ENCODE measurements at regions of chr14 and their contacts with region 1.

Region 1: GRCh38 chr14:23953464-23954278 is at the start of gene DHRS4:
- DNase-seq: peak; percentile 87
- H3K4me3 Mint-ChIP-seq: peak within 1 kb of the TSS; percentile 99
- H3K27ac Mint-ChIP-seq: peak within 1 kb of the TSS; percentile 94
- H3K4me1 Mint-ChIP-seq: peaks cover 22% of the 10 kb centered on the region
- H3K27me3 Mint-ChIP-seq: no peaks in the 10 kb centered on the region
- total RNA-seq, gene DHRS4: 22.8 to 24.0 TPM

Region 2: DNA sequence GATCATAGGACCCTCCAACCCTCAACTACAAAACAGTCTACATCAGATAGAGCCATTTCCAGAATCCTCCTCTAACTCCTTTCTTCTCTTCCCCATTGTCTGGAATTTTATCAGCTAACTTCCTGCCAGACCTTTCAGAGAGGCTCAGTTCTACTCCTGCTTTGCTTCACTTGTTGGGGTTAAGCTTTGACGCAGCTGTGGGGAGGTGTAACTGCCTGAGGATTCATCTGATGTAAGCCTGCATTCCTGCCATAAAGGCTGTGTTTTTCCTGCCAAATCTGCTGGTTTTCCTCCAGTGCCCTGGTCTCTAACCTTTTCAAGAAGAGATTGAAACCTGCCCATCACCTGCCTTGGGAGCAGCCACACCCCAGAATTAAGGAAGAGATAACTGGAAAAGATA is 300.6 kb before region 1 on chr14:
- CTCF ChIA-PET with region 1: no interaction called
- intact Hi-C with region 1: no loop called
- DNase-seq: no peak
- H3K4me3 Mint-ChIP-seq: no peak overlapping the region
- H3K27ac Mint-ChIP-seq: no peak overlapping the region
- H3K4me1 Mint-ChIP-seq: no peaks in the 10 kb centered on the region
- H3K27me3 Mint-ChIP-seq: no peaks in the 10 kb centered on the region

Region 3: DNA sequence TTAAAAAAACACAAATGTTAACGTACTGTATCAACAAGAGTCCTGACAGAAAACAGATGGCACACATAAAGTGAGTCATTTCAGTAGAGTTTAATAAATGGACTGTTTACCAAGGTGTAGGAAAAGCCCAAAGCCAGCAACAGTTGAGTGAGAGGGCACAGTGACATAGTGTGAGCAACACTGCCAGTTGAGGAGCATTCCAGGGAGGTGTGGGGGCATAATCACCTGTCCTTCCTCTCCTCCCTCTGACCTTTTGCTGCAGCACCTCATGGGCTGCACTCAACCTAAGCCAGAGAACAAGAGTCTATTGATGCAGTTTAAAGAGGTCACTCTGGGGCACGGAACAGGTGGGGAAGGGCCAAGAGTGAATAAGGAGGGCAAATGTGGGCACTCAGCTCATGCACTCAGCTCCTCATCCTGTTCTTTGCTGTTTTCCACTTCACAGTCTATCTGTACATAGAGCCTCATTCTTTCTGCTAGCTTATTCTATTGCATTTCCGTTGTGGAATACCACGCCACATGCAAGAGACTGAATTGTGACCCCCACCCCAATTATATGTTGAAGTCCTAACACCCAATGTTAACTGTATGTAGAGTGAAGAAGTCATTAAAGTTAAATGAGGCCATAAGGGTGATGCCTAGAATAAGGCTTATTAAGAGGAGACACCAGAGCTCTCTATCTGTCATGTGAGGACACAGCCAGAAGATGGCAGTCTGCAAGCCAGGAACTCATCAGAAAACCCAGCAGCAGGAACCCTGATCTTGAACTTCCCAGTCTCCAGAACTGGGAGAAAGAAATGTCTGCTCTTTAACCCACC is 288.1 kb before region 1 on chr14:
- CTCF ChIA-PET with region 1: no interaction called
- intact Hi-C with region 1: loop called (anchors 1 kb)
- DNase-seq: peak; percentile 55
- H3K4me3 Mint-ChIP-seq: no peak overlapping the region
- H3K27ac Mint-ChIP-seq: no peak overlapping the region
- H3K4me1 Mint-ChIP-seq: no peaks in the 10 kb centered on the region
- H3K27me3 Mint-ChIP-seq: no peaks in the 10 kb centered on the region

Region 4: DNA sequence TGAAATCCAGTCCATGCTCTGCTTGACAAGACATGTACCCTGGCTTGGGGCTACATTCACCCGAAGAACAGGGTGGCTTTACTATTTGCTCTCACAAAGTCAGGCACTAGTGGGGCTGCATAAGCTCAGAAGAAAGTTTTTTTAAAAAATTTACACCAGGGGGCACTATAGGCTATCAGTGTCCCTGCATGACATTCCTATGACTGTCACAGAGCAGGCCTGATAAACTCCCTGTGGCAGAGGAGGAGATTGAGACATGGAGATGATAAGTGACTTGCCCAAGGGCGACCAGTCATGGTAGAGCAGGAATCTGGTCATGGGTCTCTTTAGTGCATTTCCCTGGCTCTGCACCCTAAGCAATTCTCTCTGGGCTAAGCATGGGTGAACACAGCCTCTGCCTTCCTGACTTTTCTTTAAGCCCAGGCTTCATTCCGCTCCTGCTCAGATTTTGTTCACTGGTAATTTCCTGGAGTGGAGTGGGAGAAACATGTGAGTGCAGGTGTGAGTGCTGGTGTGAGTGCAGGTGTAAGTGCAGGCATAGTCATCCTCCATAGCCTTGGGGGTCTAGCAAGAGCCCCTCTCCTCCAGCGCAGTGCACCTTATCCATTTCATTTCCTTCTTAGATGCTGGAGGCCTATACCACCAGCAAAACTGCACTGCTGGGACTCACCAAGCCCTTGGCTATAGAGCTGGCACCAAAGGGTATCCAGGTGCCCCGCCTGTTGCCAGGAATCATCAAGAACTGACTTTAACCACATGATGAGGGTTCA is 225.9 kb before region 1 on chr14:
- CTCF ChIA-PET with region 1: no interaction called
- intact Hi-C with region 1: loop called (anchors 1 kb)
- DNase-seq: no peak
- H3K4me3 Mint-ChIP-seq: no peak overlapping the region
- H3K27ac Mint-ChIP-seq: no peak overlapping the region
- H3K4me1 Mint-ChIP-seq: no peaks in the 10 kb centered on the region
- H3K27me3 Mint-ChIP-seq: no peaks in the 10 kb centered on the region

Region 5: DNA sequence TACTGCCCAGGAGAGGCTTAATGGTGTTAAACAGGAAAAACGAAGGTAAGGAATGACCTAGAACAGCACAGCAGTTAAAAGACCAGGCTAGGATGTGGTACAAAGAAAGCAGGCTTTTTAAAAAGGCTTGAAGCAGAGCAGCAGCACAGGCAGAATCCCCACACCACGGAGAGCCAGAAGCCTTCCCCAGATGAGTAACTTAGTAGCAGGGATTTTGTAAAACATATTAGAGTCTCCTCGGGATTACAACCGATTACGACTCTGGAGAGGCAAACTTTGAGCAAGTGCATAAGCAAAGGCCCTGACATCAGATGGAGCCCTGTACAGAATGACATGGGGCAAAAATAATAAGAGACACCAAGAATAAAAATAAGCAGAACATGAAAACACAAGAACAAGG is 37.2 kb before region 1 on chr14:
- CTCF ChIA-PET with region 1: no interaction called
- intact Hi-C with region 1: no loop called
- DNase-seq: no peak
- H3K4me3 Mint-ChIP-seq: no peak overlapping the region
- H3K27ac Mint-ChIP-seq: no peak overlapping the region
- H3K4me1 Mint-ChIP-seq: no peaks in the 10 kb centered on the region
- H3K27me3 Mint-ChIP-seq: no peaks in the 10 kb centered on the region

Region 6: DNA sequence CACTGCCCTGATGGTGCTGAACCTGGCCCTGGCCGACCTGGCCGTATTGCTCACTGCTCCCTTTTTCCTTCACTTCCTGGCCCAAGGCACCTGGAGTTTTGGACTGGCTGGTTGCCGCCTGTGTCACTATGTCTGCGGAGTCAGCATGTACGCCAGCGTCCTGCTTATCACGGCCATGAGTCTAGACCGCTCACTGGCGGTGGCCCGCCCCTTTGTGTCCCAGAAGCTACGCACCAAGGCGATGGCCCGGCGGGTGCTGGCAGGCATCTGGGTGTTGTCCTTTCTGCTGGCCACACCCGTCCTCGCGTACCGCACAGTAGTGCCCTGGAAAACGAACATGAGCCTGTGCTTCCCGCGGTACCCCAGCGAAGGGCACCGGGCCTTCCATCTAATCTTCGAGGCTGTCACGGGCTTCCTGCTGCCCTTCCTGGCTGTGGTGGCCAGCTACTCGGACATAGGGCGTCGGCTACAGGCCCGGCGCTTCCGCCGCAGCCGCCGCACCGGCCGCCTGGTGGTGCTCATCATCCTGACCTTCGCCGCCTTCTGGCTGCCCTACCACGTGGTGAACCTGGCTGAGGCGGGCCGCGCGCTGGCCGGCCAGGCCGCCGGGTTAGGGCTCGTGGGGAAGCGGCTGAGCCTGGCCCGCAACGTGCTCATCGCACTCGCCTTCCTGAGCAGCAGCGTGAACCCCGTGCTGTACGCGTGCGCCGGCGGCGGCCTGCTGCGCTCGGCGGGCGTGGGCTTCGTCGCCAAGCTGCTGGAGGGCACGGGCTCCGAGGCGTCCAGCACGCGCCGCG is 362.3 kb after region 1 on chr14:
- CTCF ChIA-PET with region 1: no interaction called
- intact Hi-C with region 1: no loop called
- DNase-seq: no peak
- H3K4me3 Mint-ChIP-seq: no peak overlapping the region
- H3K27ac Mint-ChIP-seq: no peak overlapping the region
- H3K4me1 Mint-ChIP-seq: peaks cover 52% of the 10 kb centered on the region
- H3K27me3 Mint-ChIP-seq: no peaks in the 10 kb centered on the region

Region 7: DNA sequence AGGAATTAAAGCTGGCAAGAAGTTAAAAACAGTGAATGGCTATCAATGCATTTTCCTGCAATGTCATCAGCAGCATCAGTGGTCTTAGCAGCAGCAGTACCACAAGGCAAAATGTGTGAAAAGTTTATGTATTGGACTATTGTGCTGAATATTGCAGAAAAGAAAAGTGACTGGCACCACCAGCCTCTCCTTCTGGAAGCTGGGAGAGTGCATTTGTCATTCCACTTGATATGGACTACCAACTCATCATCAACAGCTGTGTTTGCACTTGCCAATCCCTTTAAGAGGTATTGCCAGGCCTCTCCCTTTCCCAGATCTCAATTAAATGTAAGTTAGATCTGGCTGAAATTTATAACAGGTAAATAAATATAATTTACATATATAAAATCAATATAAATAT is 831.3 kb after region 1 on chr14:
- CTCF ChIA-PET with region 1: no interaction called
- intact Hi-C with region 1: no loop called
- DNase-seq: no peak
- H3K4me3 Mint-ChIP-seq: no peak overlapping the region
- H3K27ac Mint-ChIP-seq: no peak overlapping the region
- H3K4me1 Mint-ChIP-seq: no peaks in the 10 kb centered on the region
- H3K27me3 Mint-ChIP-seq: peaks cover 12% of the 10 kb centered on the region

Measured in activated naive CD4-positive, alpha-beta T cell treated with anti-CD3 and anti-CD28 coated beads for 36 hours (primary cell).